H1 (cell line): ENCODE measurements at regions of chr1 and their contacts with region 1.

Region 1: DNA sequence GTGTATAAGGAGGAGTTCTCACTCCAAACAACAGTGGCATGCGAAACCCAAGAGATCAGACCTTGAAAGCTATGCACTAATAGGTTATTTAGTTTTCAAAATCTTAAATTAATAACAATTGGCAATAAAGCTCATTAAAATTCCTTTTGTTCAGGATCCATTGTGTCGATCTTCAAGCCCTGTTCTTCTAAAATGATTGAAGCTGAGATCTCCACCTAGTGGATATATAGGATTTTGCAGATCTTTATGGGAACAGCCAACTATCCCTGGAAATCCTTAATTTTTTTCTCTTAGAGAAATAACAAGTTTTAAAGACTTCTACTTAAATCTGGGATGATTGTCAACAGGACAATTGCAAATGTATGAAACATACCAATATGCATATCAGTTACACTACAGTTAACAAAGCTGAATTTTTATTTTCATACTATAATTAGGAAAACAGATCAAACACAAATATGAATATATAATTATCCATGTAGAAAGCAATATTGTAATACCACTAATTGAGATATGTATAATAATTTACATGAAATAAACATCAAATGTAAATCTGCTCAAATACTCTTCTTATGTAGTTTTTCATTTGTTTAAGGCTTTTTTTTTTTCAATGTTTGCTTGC is 43.3 kb downstream of the LRRC53 start:
- DNase-seq: no peak
- H3K4me3 ChIP-seq: no peak overlapping the region
- H3K27ac ChIP-seq: no peak overlapping the region
- H3K4me1 ChIP-seq: peaks cover 0 to 5% (median 0%) of the 10 kb centered on the region in 4 experiments; a peak in 2 of 7 replicates
- H3K27me3 ChIP-seq: no peaks in the 10 kb centered on the region
- CTCF ChIP-seq: peak in 2 of 3 experiments; percentile 47 to 51; a peak in 2 of 4 replicates
- EP300 ChIP-seq: no peak
- POLR2A ChIP-seq: no peak
- RAD21 ChIP-seq: peak; percentile 72 to 74

Region 2: DNA sequence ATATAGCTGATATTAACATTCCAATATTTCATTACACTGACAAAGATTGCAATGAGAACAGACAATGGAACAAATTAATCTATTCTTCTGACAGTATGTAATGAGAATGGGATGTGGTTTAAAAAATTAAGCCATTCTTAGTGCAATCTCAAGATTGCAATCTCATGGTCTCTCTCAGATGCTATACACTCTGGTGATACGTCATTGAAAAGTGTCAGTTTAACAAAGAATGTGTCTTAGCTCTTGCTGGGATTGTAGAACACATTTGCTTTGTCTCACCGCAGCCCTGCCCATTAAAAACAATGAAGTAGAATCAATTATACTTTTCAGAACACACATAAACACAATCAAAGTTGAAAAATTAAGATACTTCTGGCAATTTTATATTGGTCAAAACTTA is 11.8 kb before region 1 on chr1:
- CTCF ChIA-PET with region 1: interaction called, 12 read pairs
- POLR2A ChIA-PET with region 1: no interaction called
- DNase-seq: no peak
- H3K4me3 ChIP-seq: no peak overlapping the region
- H3K27ac ChIP-seq: no peak overlapping the region
- H3K4me1 ChIP-seq: no peaks in the 10 kb centered on the region
- H3K27me3 ChIP-seq: no peaks in the 10 kb centered on the region
- CTCF ChIP-seq: no peak
- EP300 ChIP-seq: no peak
- POLR2A ChIP-seq: no peak
- RAD21 ChIP-seq: no peak

Region 3: DNA sequence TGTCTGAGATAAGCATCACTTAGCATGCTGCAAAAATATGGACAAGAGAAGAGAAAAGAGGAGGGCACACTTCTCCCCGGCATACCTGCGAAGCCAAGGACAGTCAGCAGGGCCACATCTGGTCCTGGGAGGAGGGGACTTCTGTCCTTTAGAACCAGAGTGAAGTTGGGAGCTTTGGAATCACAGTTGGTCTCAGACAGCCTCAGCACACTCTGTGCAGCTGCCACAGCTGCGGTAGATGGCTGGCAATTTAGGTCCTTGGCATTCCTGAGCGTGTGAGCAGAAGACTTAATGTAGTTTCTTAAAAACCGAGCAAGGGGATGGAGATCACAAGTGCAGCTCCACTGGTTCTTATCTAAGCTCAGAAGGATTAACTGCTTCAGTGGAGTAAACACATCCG is 11.0 kb after region 1 on chr1:
- CTCF ChIA-PET with region 1: interaction called, 27 read pairs
- POLR2A ChIA-PET with region 1: no interaction called
- DNase-seq: no peak
- H3K4me3 ChIP-seq: no peak overlapping the region
- H3K27ac ChIP-seq: no peak overlapping the region
- H3K4me1 ChIP-seq: no peaks in the 10 kb centered on the region; a peak in 1 of 7 replicates
- H3K27me3 ChIP-seq: no peaks in the 10 kb centered on the region
- CTCF ChIP-seq: no peak
- EP300 ChIP-seq: no peak
- POLR2A ChIP-seq: no peak
- RAD21 ChIP-seq: no peak